ENCODE measurements at regions of chr1 and their contacts with region 1.

Region 1: DNA sequence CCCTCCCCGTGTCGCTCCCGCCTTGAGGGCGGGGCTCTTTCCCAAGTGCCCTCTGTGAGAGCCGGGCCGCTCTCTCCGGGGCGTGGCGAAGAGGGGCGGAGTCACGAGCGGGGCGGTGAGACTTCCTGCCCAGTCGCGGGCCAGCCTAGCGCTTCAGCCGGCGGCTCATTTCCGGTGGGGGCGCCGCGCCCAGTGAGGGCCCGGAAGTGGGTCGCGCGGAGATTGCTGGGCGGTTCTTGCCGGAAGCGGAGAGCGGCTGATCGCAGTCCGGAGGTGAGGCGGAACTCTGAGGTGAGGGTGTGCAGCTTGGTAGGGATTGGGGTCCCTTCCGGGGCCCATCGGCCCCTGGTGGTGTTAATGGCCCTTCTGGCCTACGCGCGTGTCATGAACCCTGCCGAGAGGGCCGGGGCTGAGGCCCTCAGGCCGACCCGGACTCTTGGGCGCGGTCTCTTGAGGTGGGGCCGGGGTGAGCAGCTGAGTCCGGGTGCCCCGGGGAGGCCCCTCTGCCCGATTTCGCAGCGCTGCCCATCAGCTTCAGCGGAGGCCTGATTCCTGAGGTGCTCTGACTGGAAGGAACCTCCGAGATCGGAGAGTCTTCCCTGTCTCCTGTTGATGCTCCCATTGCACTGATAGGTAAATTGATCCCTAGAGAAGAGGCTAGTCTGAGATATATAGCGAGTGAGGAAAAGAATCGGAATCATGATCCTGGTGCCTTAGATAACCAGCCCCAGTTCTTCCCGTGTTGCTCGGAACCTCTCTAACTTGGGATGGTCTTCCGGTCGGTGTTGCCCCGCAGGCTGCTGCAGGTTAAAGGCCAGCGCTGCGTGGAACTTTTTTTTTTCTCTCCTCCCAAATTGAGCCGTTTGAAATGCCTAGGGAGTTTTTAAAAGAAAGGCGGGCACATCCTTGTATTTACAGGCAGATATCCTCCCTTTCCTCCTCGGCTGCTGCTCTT is at the start of gene CAP1:
- DNase-seq: peak; percentile 100
- ATAC-seq: peak; percentile 85
- H3K4me3 Mint-ChIP-seq: peak within 1 kb of the TSS; percentile 94
- H3K27ac Mint-ChIP-seq: peak within 1 kb of the TSS; percentile 97
- H3K4me1 Mint-ChIP-seq: peaks cover 49% of the 10 kb centered on the region
- H3K27me3 Mint-ChIP-seq: no peaks in the 10 kb centered on the region
- total RNA-seq, gene CAP1: 579 to 614 TPM

Region 2: GRCh38 chr1:40024717-40025116 is 16.1 kb before region 1 on chr1:
- POLR2A ChIA-PET with region 1: no interaction called
- DNase-seq: no peak
- ATAC-seq: no peak
- H3K4me3 Mint-ChIP-seq: no peak overlapping the region
- H3K27ac Mint-ChIP-seq: no peak overlapping the region
- H3K4me1 Mint-ChIP-seq: peaks cover 3% of the 10 kb centered on the region
- H3K27me3 Mint-ChIP-seq: peaks cover 9% of the 10 kb centered on the region

Region 3: DNA sequence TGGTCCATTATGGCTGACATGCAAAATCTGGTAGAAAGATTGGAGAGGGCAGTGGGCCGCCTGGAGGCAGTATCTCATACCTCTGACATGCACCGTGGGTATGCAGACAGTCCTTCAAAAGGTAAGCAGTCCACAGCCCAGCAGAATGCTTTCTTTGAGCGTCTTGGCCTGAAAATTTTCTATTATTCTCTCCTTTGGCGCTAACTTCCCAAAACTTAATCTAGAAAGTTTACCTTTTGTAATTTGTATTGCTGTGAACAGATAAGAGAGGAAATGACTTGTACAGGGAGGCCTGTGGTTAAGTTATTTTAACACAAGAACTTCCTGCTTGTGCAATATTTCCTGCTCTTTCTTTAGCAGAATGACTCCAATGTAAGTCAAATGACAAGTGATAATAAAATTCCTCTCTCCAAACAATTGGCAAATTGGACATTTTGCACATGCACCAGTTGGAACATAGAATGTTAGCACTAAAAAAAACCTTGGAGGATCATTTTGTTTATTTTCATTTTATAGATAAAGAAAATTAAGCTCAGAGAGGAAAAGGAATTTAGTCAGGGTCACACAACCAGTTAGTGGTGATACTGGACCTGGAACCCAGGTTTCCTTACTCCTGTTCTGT is 18.7 kb after region 1 on chr1:
- POLR2A ChIA-PET with region 1: interaction called, 53 read pairs
- DNase-seq: no peak
- ATAC-seq: peak; percentile 64
- H3K4me3 Mint-ChIP-seq: peak overlapping the region; percentile 73
- H3K27ac Mint-ChIP-seq: peak overlapping the region; percentile 84
- H3K4me1 Mint-ChIP-seq: peaks cover 77% of the 10 kb centered on the region
- H3K27me3 Mint-ChIP-seq: no peaks in the 10 kb centered on the region

Region 4: GRCh38 chr1:40107290-40108262 is 66.8 kb after region 1 on chr1:
- POLR2A ChIA-PET with region 1: no interaction called
- DNase-seq: no peak
- ATAC-seq: no peak
- H3K4me3 Mint-ChIP-seq: no peak overlapping the region
- H3K27ac Mint-ChIP-seq: no peak overlapping the region
- H3K4me1 Mint-ChIP-seq: no peaks in the 10 kb centered on the region
- H3K27me3 Mint-ChIP-seq: peaks cover 25% of the 10 kb centered on the region

Region 5: GRCh38 chr1:40167317-40167716 is 126.5 kb after region 1 on chr1:
- POLR2A ChIA-PET with region 1: no interaction called
- DNase-seq: no peak
- ATAC-seq: no peak
- H3K4me3 Mint-ChIP-seq: no peak overlapping the region
- H3K27ac Mint-ChIP-seq: no peak overlapping the region
- H3K4me1 Mint-ChIP-seq: peaks cover 29% of the 10 kb centered on the region
- H3K27me3 Mint-ChIP-seq: no peaks in the 10 kb centered on the region

Region 6: DNA sequence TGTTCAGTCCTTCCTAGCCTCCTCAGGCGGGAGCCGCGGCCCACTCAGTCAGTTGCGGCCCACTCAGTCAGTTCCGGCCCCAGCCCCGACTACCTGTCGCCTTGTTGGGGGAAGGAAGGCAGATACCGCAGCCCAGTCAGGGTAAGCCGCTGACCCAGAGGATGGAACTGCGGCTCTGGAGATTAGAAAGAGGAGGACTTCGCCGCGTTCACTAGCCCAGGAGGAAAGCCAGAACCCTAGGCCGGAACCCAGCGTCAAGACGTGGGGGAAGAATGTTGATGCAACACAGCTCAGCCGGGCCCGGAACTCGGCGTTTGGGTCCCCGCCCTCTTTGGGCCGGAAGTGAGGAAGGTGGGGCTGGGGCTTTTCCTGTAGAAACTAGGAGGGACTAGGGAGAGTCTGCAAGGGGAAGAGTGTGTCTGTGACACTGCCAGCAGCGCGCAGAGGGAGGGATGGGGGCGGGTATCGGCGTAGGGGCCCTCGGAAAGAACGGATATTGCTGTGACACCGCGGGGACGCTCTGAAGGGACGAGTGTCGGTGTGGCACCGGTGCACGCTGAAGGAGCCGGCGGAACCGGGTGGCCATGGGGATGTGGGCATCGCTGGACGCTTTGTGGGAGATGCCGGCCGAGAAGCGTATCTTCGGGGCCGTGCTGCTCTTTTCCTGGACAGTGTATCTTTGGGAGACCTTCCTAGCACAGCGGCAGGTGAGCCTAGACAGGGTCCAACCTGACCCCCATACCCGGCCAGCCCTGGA is 217.1 kb after region 1 on chr1 and contains the start of gene ZMPSTE24:
- POLR2A ChIA-PET with region 1: interaction called, 12 read pairs
- DNase-seq: peak; percentile 91
- ATAC-seq: peak; percentile 96
- H3K4me3 Mint-ChIP-seq: peak within 1 kb of the TSS; percentile 94
- H3K27ac Mint-ChIP-seq: peak within 1 kb of the TSS; percentile 99
- H3K4me1 Mint-ChIP-seq: peaks cover 22% of the 10 kb centered on the region
- H3K27me3 Mint-ChIP-seq: no peaks in the 10 kb centered on the region
- total RNA-seq, gene ZMPSTE24: 20.6 to 21.2 TPM

Region 7: DNA sequence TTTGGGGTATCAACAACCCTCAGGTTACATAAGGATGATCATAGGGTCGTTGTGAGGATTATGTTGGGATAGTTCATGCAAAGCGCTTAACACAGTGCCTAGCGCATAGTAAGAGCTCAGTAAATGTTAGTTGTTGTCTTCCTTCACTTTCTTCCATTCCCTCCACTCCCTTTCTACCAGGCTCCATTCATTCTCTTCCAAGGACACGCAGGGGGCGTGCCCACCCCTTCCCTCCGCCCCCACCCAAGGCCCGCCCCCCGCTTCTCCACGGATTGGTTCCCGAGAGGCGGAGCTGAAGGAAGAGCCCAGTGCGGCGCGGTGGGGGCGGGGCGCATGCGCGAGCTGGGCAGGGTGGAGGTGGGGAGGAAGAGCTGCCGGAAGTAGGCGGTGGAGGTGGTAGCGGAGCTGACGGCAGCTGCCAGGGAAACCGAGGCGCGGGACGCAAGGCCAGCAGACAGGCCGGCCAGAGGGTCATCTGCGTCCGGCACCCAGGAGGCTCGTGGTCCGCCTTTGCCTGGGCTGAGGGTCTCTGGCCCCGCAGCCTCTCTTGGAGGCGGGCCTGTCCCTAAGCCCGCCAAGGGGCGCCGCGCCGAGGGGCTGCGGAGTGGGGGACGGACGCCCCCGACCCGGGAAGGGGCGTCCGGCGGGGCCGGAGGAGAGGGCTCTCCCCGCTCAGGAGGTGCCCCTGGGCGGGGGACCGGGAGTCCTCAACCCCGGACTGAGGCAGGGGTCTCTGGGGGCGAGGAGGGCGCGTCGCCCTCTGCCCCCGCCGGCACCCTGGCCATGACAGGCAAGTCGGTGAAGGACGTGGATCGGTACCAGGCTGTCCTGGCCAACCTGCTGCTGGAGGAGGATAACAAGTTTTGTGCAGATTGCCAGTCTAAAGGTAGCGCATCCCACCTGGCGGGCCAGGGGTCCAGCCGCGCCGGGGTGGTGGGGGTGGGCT is 332.8 kb after region 1 on chr1 and contains the start of gene SMAP2:
- POLR2A ChIA-PET with region 1: interaction called, 10 read pairs
- DNase-seq: peak; percentile 97
- ATAC-seq: peak; percentile 87
- H3K4me3 Mint-ChIP-seq: peak within 1 kb of the TSS; percentile 99
- H3K27ac Mint-ChIP-seq: peak within 1 kb of the TSS; percentile 99
- H3K4me1 Mint-ChIP-seq: peaks cover 33% of the 10 kb centered on the region
- H3K27me3 Mint-ChIP-seq: no peaks in the 10 kb centered on the region
- total RNA-seq, gene SMAP2: 133 to 138 TPM

Region 8: GRCh38 chr1:40385437-40386358 is 344.9 kb after region 1 on chr1:
- POLR2A ChIA-PET with region 1: interaction called, 15 read pairs
- DNase-seq: no peak
- ATAC-seq: peak; percentile 55
- H3K4me3 Mint-ChIP-seq: peak overlapping the region; percentile 85
- H3K27ac Mint-ChIP-seq: peak overlapping the region; percentile 98
- H3K4me1 Mint-ChIP-seq: peaks cover 84% of the 10 kb centered on the region
- H3K27me3 Mint-ChIP-seq: no peaks in the 10 kb centered on the region